Caco-2 (cell line): ENCODE measurements at regions of chr12 and their contacts with region 1.

Region 1: DNA sequence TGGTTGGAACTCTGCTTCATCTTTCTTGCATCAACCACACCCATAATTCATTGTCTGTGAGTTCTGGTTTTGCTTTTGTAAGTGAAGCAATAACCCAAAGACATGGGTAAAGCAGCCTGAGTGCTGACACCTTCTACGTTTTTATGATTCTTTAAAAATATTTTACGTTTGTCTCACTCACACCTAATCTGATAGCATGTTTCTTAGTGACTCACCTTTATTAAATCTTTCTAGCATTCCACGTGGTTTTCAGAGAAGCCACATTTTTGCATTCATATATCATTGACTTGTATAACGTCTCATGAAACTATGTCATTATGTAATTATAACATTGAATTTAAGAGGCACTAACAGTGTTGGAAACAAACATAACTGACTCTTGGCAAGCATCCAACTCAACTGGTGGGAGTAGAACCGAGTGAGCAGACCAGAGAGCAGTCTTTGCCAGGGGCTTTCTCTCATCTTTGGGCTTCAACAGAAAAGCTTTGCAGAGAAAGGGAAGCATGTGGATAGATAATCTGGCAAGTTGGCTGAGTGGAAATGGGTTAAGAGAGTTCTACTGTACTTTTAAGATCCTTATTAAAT is 118.8 kb downstream of the TPH2 start:
- DNase-seq: no peak
- H3K4me3 ChIP-seq: no peak overlapping the region
- H3K4me3 Mint-ChIP-seq: no peak overlapping the region
- H3K27ac Mint-ChIP-seq: no peak overlapping the region
- H3K4me1 ChIP-seq: peaks cover 21% of the 10 kb centered on the region
- H3K4me1 Mint-ChIP-seq: peaks cover 27% of the 10 kb centered on the region
- H3K27me3 ChIP-seq: no peaks in the 10 kb centered on the region
- H3K27me3 Mint-ChIP-seq: no peaks in the 10 kb centered on the region
- CTCF ChIP-seq: no peak

Region 2: GRCh38 chr12:71958993-71959578 is 98.3 kb before region 1 on chr12:
- CTCF ChIA-PET with region 1: no interaction called
- POLR2A ChIA-PET with region 1: no interaction called
- intact Hi-C with region 1: loop called (anchors 10 kb)
- DNase-seq: no peak
- H3K4me3 ChIP-seq: no peak overlapping the region
- H3K4me3 Mint-ChIP-seq: no peak overlapping the region
- H3K27ac Mint-ChIP-seq: no peak overlapping the region
- H3K4me1 ChIP-seq: peaks cover 24% of the 10 kb centered on the region
- H3K4me1 Mint-ChIP-seq: peaks cover 19% of the 10 kb centered on the region
- H3K27me3 ChIP-seq: no peaks in the 10 kb centered on the region
- H3K27me3 Mint-ChIP-seq: no peaks in the 10 kb centered on the region
- CTCF ChIP-seq: no peak

Region 3: GRCh38 chr12:72081777-72082176 is 24.4 kb after region 1 on chr12:
- CTCF ChIA-PET with region 1: no interaction called
- POLR2A ChIA-PET with region 1: no interaction called
- intact Hi-C with region 1: no loop called
- DNase-seq: no peak
- H3K4me3 ChIP-seq: no peak overlapping the region
- H3K4me3 Mint-ChIP-seq: no peak overlapping the region
- H3K27ac Mint-ChIP-seq: no peak overlapping the region
- H3K4me1 ChIP-seq: no peaks in the 10 kb centered on the region
- H3K4me1 Mint-ChIP-seq: no peaks in the 10 kb centered on the region
- H3K27me3 ChIP-seq: no peaks in the 10 kb centered on the region
- H3K27me3 Mint-ChIP-seq: no peaks in the 10 kb centered on the region
- CTCF ChIP-seq: no peak